ENCODE measurements at regions of chr7 and their contacts with region 1.

Region 1: DNA sequence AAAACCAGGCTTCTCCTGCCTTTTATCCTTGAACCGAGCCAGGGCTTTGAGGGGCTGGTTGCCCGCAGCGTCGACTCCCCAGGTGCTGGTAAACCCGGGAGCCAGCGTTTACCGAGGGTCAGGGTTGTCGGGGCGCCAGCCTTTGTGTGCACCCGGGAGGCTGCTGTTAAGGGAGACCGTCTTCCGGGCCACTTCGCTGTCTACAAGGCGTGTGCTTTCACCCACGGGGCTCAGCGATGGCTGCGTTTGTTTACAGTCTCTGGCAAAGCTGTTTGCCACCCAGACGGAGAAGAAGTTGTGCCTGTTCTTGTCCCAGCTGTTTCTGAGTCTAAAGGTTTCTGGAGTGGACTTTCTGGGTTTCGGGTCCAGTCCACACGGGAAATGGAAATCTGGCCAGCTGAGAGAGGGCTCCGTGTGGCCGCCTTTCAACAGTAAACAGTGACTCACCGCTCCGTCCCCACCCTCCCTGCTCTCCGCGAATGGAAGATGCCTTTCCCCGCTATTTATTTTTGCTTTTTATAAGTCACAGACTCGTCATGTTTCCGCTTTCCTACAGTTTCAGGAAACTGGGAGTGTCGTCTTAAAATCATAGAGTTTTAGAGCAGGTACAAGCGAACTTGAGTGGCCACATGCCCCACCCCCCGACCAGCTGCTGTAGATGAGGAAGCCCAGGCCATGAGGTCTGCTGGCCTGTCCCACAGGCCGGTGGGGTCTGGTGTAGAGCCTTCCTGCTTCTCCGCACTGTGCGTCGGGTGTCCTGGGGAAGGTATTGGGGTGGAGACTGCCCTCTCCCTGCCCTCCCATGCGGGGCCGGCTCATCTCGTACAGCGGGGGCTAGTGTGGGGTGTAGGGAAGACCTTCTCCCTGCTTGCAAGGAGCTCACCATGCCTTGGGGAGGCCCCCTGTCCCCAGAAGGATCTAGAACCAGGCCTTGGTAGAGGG is 2.3 kb downstream of the MAFK start:
- DNase-seq: peak; percentile 94
- H3K4me3 Mint-ChIP-seq: peak overlapping the region; percentile 81
- H3K27ac Mint-ChIP-seq: peak overlapping the region; percentile 86
- H3K4me1 Mint-ChIP-seq: peaks cover 12% of the 10 kb centered on the region
- H3K27me3 Mint-ChIP-seq: no peaks in the 10 kb centered on the region
- CTCF ChIP-seq: no peak

Region 2: DNA sequence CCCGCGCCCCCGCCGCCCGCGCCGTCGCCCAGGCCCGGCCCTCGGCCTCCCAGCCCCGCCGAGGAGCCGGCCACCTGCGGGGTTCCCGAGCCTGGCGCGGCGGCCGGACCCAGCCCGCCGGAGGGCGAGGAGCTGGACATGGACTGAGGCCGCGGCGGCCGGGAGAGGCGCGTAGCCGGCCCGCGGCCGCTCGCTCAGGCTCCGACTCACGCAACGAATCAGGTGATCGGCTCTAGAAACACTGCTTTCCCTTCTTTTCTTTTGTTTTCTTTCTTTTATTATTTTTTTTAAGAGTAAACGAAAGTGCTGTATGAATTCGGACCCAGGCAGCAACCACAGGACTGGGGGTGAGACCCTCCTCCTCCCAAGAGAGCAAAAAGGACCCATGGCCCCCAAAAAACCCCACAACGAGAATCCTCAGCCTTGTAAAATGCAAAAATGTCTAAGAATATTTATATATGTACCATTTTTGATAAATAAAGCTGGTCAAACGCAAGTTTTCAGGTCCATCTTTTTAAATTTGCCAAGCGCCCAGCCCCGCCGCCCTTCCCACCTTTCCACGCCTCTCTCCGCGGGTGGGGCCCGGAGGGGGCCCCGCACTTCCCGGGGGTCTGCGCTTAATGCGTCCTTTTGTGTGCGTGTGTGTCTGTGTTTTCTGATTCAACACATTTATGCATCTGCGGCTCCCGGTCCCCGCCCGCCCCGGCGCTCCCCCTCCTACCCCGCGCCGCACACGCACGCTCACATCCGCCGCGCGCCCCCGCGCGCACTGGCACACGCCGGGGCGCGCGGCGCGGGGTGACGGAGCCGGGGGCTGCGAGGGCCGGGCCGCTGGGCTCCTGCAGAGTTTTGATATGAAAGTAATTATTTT is 295.7 kb before region 1 on chr7:
- CTCF ChIA-PET with region 1: no interaction called
- POLR2A ChIA-PET with region 1: no interaction called
- intact Hi-C with region 1: no loop called
- DNase-seq: no peak
- H3K4me3 Mint-ChIP-seq: no peak overlapping the region
- H3K27ac Mint-ChIP-seq: no peak overlapping the region
- H3K4me1 Mint-ChIP-seq: no peaks in the 10 kb centered on the region
- H3K27me3 Mint-ChIP-seq: peaks cover 73% of the 10 kb centered on the region
- CTCF ChIP-seq: no peak

Region 3: GRCh38 chr7:1503816-1504775 is 28.7 kb before region 1 on chr7 and contains the start of gene INTS1:
- CTCF ChIA-PET with region 1: interaction called, 3 read pairs
- POLR2A ChIA-PET with region 1: interaction called, 28 read pairs
- intact Hi-C with region 1: loop called (anchors 1 kb)
- DNase-seq: peak; percentile 92
- H3K4me3 Mint-ChIP-seq: peak within 1 kb of the TSS; percentile 85
- H3K27ac Mint-ChIP-seq: peak within 1 kb of the TSS; percentile 89
- H3K4me1 Mint-ChIP-seq: peaks cover 14% of the 10 kb centered on the region
- H3K27me3 Mint-ChIP-seq: no peaks in the 10 kb centered on the region
- CTCF ChIP-seq: peak; percentile 91
- total RNA-seq, gene INTS1: 86.3 and 93.5 TPM in 2 replicates

Region 4: GRCh38 chr7:1512781-1513656 is 19.7 kb before region 1 on chr7:
- CTCF ChIA-PET with region 1: no interaction called
- POLR2A ChIA-PET with region 1: interaction called, 14 read pairs
- intact Hi-C with region 1: no loop called
- DNase-seq: peak; percentile 95
- H3K4me3 Mint-ChIP-seq: peak overlapping the region; percentile 35
- H3K27ac Mint-ChIP-seq: peak overlapping the region; percentile 27
- H3K4me1 Mint-ChIP-seq: no peaks in the 10 kb centered on the region
- H3K27me3 Mint-ChIP-seq: no peaks in the 10 kb centered on the region
- CTCF ChIP-seq: no peak

Region 5: DNA sequence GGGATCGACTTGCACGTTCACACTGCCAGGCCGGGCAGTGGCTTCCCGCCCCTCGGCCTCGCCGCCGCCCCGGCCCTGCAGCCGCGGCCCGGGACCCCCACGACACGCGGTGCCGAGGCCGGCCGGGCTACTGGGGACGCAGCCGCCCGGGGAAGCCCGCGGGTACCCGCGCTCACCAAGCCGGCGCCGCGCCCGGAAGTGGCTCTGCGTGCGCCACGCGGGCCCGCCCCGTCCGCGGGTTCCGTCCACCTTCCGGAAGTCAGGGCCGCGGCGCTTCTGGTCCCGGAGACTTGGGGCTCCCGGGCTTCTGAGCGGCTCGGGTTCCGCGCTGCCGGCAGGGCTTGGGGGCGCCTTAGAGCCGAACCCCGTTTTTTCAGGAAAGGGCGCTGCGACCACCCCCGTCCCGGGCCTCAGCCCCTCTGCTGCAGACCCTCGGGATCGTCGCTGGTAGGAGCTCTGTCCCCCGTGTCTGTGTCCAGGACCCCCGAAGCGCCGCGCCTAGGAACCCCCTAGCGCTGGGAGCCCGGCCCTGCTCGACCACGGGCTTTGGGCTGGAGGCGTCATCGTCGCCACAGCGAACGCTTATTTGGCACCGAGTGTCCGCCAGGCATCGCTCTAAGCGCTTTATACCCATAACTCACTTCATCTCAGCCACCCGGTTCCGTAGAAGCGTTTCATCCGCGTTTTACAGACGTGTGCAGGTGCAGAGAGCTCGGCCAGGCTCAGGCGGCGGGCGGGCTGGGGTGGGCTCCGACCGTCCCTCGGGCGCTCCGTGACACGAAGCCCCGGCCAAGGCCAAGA is 37.3 kb after region 1 on chr7 and contains the start of gene PSMG3:
- CTCF ChIA-PET with region 1: no interaction called
- POLR2A ChIA-PET with region 1: interaction called, 19 read pairs
- intact Hi-C with region 1: no loop called
- DNase-seq: peak; percentile 90
- H3K4me3 Mint-ChIP-seq: peak within 1 kb of the TSS; percentile 72
- H3K27ac Mint-ChIP-seq: peak within 1 kb of the TSS; percentile 88
- H3K4me1 Mint-ChIP-seq: peaks cover 30% of the 10 kb centered on the region
- H3K27me3 Mint-ChIP-seq: no peaks in the 10 kb centered on the region
- CTCF ChIP-seq: no peak
- total RNA-seq, gene PSMG3: 38.2 and 42.1 TPM in 2 replicates

Measured in MCF 10A (cell line).